ENCODE measurements at regions of chr16 and their contacts with region 1.

Region 1: GRCh38 chr16:68503334-68503733 is 35.8 kb upstream of the ZFP90 start:
- DNase-seq: no peak
- ATAC-seq: no peak
- H3K4me3 ChIP-seq: no peak overlapping the region
- H3K27ac ChIP-seq: no peak overlapping the region
- H3K4me1 ChIP-seq: peaks cover 4% of the 10 kb centered on the region
- H3K27me3 ChIP-seq: no peaks in the 10 kb centered on the region
- CTCF ChIP-seq: no peak
- POLR2A ChIP-seq: no peak

Region 2: GRCh38 chr16:67546761-67547422 is 956.4 kb before region 1 on chr16:
- intact Hi-C with region 1: no loop called
- DNase-seq: peak; percentile 87 to 93 (median 90)
- ATAC-seq: peak; percentile 93
- H3K4me3 ChIP-seq: no peak overlapping the region
- H3K27ac ChIP-seq: peak overlapping the region in 3 of 4 donors; percentile 50 to 64 (median 60)
- H3K4me1 ChIP-seq: peaks cover 26% of the 10 kb centered on the region
- H3K27me3 ChIP-seq: no peaks in the 10 kb centered on the region
- CTCF ChIP-seq: peak; percentile 92 to 99 (median 97)
- POLR2A ChIP-seq: peak in 2 of 3 donors; percentile 15 to 29

Region 3: DNA sequence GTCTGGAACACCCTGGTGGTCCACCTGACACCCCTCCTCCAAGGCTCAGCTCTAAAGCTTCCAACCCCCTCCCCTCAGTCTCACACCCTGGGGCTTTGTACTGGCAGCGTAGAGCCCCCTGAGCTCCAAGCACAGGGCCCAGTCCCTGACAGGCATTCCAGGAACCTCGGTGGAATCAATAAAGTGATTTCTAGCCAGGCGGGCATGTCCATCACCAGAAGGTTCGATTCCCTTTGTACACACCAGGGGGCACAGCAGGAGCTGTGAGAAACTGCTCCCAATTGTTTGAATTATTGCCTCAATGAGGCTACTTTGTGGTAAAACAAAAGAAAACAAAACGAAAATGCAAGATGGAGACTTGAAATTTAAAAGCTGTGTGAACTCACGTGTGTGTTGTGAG is 106.9 kb before region 1 on chr16:
- intact Hi-C with region 1: loop called (anchors 5 kb)
- DNase-seq: peak; percentile 80 to 84 (median 83)
- ATAC-seq: peak; percentile 94
- H3K4me3 ChIP-seq: no peak overlapping the region
- H3K27ac ChIP-seq: no peak overlapping the region
- H3K4me1 ChIP-seq: peaks cover 24% of the 10 kb centered on the region
- H3K27me3 ChIP-seq: no peaks in the 10 kb centered on the region
- CTCF ChIP-seq: peak; percentile 68 to 96 (median 90)
- POLR2A ChIP-seq: no peak

Region 4: DNA sequence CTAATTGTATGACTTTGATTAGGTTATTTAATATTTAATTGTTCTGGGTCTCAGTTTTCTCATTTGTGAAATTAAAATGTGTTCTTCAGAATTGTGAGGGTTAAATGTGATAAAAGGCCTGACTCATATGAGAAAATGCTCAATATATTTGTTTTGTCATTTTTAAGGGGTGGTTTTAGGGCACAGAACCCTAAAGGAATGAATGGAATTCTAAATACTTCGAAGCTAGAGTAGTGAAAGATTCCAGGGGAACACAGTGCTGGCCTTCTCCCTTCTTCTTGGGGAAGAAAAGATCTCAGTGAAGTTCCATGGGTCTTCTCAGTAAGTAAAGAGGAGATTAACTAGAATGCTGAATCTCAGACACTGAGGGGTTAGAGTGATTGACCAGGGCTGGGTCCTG is 51.2 kb before region 1 on chr16:
- intact Hi-C with region 1: loop called (anchors 10 kb)
- DNase-seq: no peak
- ATAC-seq: no peak
- H3K4me3 ChIP-seq: no peak overlapping the region
- H3K27ac ChIP-seq: no peak overlapping the region
- H3K4me1 ChIP-seq: peaks cover 10% of the 10 kb centered on the region
- H3K27me3 ChIP-seq: no peaks in the 10 kb centered on the region
- CTCF ChIP-seq: no peak
- POLR2A ChIP-seq: no peak

Measured in body of pancreas (tissue), 4 donors.